ENCODE measurements at regions of chr7 and their contacts with region 1.

Region 1: GRCh38 chr7:138738551-138739335 is 37.6 kb upstream of the SVOPL start:
- DNase-seq: peak; percentile 83
- H3K4me3 ChIP-seq: no peak overlapping the region; a peak in 1 of 4 replicates
- H3K27ac ChIP-seq: no peak overlapping the region; a peak in 1 of 4 replicates
- H3K4me1 ChIP-seq: peaks cover 0 to 5% of the 10 kb centered on the region in 2 experiments; a peak in 2 of 4 replicates
- H3K27me3 ChIP-seq: no peaks in the 10 kb centered on the region
- CTCF ChIP-seq: peak; percentile 99
- EP300 ChIP-seq: no peak
- RAD21 ChIP-seq: peak; percentile 100

Region 2: DNA sequence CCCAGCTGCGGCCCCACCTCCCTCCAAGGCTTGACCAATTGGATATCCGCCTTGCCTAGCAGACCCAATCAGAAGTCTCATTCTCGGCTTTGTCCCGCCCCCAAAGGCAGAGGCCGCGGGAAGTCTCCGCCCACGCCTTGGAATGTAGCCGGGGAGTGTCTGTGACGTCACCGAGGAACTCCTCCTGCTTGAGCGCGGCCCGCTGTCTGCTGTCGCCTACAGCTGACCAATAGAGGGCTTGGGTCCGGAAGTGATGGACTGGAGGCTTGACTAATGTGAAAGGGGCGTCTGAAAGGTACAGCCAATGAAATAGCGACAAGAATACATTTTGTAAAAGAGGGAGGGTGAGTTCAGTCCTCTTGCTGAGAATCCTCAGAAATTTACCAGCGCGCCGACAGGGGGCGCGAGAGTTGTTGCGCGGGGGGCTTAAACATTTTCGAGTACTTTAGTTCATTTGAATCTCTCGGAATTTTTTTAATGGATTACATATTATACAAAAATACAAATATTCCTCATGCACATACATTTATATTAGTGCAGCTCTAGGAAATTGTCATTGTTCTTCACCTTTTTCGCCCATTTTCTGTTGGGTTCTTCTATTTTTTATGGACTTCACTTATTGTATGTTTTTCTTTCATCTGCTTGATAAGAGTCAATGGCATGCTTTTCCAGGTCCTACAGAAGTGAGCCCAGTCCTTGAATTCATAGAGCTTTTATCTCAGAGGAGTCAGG is 736.5 kb before region 1 on chr7:
- CTCF ChIA-PET with region 1: interaction called, 33 read pairs
- POLR2A ChIA-PET with region 1: no interaction called
- DNase-seq: peak; percentile 94
- H3K4me3 ChIP-seq: peak overlapping the region; percentile 84 to 93
- H3K27ac ChIP-seq: peak overlapping the region; percentile 88 to 90
- H3K4me1 ChIP-seq: peaks cover 14 to 25% of the 10 kb centered on the region in 2 experiments; a peak in 2 of 4 replicates
- H3K27me3 ChIP-seq: no peaks in the 10 kb centered on the region
- CTCF ChIP-seq: peak; percentile 100
- EP300 ChIP-seq: 0 out of 4 replicates have a peak, but pooled peaks of 1 of the 2 experiments have one; percentile 6
- RAD21 ChIP-seq: peak; percentile 72

Region 3: GRCh38 chr7:138151731-138152577 is 586.8 kb before region 1 on chr7:
- CTCF ChIA-PET with region 1: interaction called, 14 read pairs
- POLR2A ChIA-PET with region 1: interaction called, 7 read pairs
- DNase-seq: no peak
- H3K4me3 ChIP-seq: no peak overlapping the region
- H3K27ac ChIP-seq: no peak overlapping the region
- H3K4me1 ChIP-seq: peaks cover 0 to 2% of the 10 kb centered on the region in 2 experiments; a peak in 1 of 4 replicates
- H3K27me3 ChIP-seq: no peaks in the 10 kb centered on the region
- CTCF ChIP-seq: no peak
- EP300 ChIP-seq: no peak
- RAD21 ChIP-seq: no peak

Region 4: DNA sequence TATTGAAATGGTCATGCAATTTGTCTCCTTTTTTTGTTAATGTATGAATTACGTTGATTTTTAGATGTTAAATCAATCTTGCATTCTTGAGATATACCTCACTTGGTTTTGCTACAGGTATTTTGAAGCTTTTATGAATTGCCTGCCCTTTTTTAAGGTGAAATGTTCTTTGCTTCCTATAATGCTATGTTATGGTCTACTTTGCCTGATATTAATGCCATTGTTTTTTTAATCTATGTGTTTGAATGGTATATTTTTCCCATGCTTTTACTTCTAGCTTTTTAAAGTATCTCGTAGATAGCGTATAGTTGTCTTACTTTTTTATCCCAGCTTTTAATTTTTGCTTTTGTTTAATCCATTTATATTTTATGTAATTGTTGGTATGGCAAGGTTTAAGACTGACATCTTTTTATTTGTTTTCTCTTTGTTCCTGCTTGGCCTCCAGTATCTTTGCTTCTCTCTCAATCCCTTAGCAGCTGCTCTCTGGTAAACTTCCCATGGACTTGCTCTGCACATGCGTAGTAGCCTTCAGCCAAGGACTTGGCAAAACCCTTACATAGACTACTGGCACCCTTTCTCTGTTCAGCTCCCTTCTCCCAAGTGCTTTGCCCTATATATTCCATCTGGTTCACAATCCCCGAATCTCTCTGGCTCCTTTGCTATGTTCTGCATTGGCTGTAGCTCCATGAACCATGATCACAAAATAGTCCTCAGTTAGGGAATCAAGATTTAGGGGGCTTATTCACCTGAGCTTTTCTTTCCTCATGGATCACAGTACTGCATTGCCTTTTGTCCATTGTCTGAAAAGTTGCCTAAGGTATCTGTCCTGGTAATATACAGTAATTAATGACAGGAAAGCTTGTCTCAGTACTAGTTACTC is 270.3 kb before region 1 on chr7:
- CTCF ChIA-PET with region 1: interaction called, 16 read pairs
- POLR2A ChIA-PET with region 1: no interaction called
- DNase-seq: no peak
- H3K4me3 ChIP-seq: no peak overlapping the region
- H3K27ac ChIP-seq: no peak overlapping the region; a peak in 1 of 4 replicates
- H3K4me1 ChIP-seq: peaks cover 5 to 6% of the 10 kb centered on the region in 2 experiments; a peak in 3 of 4 replicates
- H3K27me3 ChIP-seq: no peaks in the 10 kb centered on the region
- CTCF ChIP-seq: no peak
- EP300 ChIP-seq: no peak
- RAD21 ChIP-seq: no peak

Region 5: DNA sequence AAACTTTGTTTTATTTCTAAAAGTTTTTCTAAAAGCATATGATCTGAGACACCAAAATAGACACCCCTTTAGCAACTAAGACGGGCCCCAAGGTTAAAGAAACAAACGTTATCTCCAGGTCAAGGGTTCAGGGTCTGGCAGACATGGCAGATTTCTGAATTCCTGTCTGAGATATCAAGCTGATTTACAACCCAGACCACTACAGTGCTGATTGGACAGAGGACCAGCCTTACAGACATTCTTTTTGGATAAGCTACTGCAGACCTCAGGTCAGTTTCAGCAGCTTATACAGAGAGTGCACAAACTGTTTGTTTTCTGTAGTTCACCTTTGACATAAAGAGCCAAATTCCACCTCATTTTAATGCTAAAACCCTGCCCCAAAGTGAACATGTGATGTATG is 72.4 kb before region 1 on chr7:
- CTCF ChIA-PET with region 1: interaction called, 12 read pairs
- POLR2A ChIA-PET with region 1: no interaction called
- DNase-seq: peak; percentile 58
- H3K4me3 ChIP-seq: no peak overlapping the region
- H3K27ac ChIP-seq: peak overlapping the region in 1 of 2 experiments; percentile 90; a peak in 2 of 4 replicates
- H3K4me1 ChIP-seq: peaks cover 0 to 47% of the 10 kb centered on the region in 2 experiments; a peak in 2 of 4 replicates
- H3K27me3 ChIP-seq: no peaks in the 10 kb centered on the region
- CTCF ChIP-seq: no peak
- EP300 ChIP-seq: peak in 1 of 2 experiments; percentile 95; a peak in 2 of 4 replicates
- RAD21 ChIP-seq: no peak; the same call in 1 of the 2 replicates

Region 6: DNA sequence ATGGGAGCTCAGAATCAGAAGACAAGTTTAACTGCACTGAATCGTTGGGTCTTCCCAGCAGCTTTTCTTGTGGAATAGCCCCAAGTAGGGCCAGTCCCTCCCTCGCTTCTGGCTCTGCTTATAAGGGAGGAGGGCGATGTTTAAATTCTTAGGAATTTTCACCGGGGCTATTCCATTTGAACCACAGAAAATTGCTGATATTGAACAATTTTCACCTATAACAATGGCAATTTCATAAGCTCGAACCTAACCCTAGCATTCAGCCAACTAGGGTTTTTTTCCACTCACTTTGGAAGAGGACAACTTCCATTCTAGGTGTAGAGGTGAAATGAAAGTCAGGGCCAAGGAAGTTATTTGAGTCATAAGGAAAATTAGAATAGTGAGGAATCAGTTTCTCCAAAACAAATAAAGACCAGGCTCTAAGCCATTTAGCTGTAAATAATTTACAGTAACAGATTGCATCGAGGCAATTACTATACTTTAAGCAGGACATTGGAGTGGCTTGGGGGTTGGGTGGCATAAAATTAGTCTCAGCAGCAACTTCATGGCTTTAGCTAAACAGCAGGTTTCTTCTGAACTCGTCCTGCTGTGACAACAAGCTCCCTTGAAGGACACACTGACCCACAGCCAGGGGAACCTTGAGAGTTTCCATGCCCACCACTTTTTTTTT is 60.7 kb after region 1 on chr7:
- CTCF ChIA-PET with region 1: no interaction called
- POLR2A ChIA-PET with region 1: no interaction called
- DNase-seq: no peak
- H3K4me3 ChIP-seq: no peak overlapping the region
- H3K27ac ChIP-seq: no peak overlapping the region
- H3K4me1 ChIP-seq: no peaks in the 10 kb centered on the region
- H3K27me3 ChIP-seq: no peaks in the 10 kb centered on the region
- CTCF ChIP-seq: no peak
- EP300 ChIP-seq: no peak
- RAD21 ChIP-seq: no peak

Measured in SK-N-SH (cell line).